CD4-positive, alpha-beta memory T cell (primary cell): ENCODE measurements at regions of chr16 and their contacts with region 1.

Region 1: GRCh38 chr16:69186642-69187445 is at the start of gene SNTB2:
- DNase-seq: peak; percentile 79 to 89 (median 82)
- H3K4me3 ChIP-seq: peak within 1 kb of the TSS; percentile 73 to 77
- H3K4me3 Mint-ChIP-seq: peak within 1 kb of the TSS; percentile 96 to 100 (median 99)
- H3K27ac ChIP-seq: peak within 1 kb of the TSS; percentile 51
- H3K27ac Mint-ChIP-seq: peak within 1 kb of the TSS; percentile 93 to 100 (median 98)
- H3K4me1 ChIP-seq: peaks cover 54% of the 10 kb centered on the region
- H3K4me1 Mint-ChIP-seq: peaks cover 29 to 61% (median 45%) of the 10 kb centered on the region in 4 donors
- H3K27me3 ChIP-seq: no peaks in the 10 kb centered on the region
- H3K27me3 Mint-ChIP-seq: peaks cover 0 to 2% of the 10 kb centered on the region in 2 donors
- total RNA-seq, gene SNTB2: 15.4 to 21.2 TPM

Region 2: DNA sequence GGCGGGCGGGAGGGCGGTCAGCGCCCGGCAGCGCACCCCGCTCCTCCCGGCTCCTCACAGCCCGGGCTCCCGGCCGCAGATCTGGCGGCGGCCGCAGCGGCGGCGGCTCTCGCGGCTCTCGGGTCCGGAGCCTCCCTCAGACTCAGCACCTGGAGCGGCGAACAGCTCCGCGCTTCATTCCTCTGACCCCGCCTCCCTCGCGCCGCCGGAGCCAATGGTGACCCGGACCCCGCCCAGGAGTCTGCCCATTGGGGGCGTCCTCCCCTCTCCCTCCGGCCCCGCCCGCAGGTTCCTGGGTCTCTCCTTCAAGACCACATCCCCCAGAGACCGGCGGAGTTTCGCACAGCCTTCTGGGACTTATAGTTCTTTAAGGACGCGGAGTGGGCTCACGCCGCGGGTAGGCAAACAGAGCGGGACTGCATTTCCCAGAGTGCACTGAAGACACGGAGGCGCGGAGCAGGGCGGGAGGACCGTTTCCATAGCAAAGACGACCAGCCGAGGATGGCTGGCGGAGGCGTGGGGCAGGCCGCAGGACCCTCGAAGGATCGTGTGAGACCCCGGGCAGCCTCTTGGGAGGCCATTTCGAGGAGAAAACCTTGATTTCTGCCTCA is 738.4 kb before region 1 on chr16 and contains the start of gene SMPD3:
- CTCF ChIA-PET with region 1: no interaction called
- POLR2A ChIA-PET with region 1: no interaction called
- intact Hi-C with region 1: loop called (anchors 1 kb)
- DNase-seq: peak; percentile 97 to 99 (median 98)
- H3K4me3 ChIP-seq: peak within 1 kb of the TSS; percentile 47 to 61
- H3K4me3 Mint-ChIP-seq: peak within 1 kb of the TSS; percentile 70 to 89 (median 78)
- H3K27ac ChIP-seq: no peak within 1 kb of the TSS
- H3K27ac Mint-ChIP-seq: peak within 1 kb of the TSS in 6 of 7 donors; percentile 43 to 88 (median 65)
- H3K4me1 ChIP-seq: peaks cover 36% of the 10 kb centered on the region
- H3K4me1 Mint-ChIP-seq: peaks cover 15 to 34% (median 22%) of the 10 kb centered on the region in 4 donors
- H3K27me3 ChIP-seq: peaks cover 8% of the 10 kb centered on the region
- H3K27me3 Mint-ChIP-seq: peaks cover 12 to 14% of the 10 kb centered on the region in 2 donors
- total RNA-seq, gene SMPD3: 0.75 to 3.1 TPM

Region 3: DNA sequence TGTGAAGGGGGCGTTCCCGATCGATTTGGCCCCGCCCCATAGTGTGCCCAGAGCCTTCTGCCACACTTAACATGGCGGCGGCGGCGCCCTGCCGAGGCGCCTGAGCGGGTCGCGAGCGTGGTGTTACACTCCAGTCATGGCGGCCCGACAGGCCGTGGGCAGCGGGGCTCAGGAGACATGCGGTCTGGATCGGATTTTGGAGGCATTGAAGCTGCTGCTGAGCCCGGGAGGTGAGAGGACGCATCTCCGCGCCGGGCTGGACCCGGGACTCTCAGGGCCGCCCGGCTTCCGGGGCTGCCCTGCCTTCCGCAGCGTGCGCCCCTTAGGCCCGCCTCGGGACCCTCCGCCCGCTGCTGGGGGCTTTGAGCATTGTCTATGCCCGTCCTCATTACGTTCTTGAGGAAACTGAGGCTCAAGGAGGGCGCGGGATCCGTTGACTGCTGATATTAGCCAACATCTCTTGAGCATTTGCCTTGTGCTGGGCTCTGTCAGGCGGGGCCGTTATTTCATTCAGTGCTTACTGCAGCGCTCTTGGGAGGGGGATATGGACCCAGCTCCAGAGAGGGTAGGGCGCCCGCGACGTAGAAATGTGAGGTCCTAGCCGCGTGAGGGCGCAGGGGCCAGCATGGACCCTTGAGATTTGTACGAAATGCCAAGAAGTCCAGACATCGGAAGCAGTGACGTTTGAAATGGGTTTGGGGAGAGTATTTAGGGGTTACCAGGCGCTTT is 343.2 kb before region 1 on chr16 and contains the start of gene TANGO6:
- CTCF ChIA-PET with region 1: no interaction called
- POLR2A ChIA-PET with region 1: no interaction called
- intact Hi-C with region 1: loop called (anchors 1 kb)
- DNase-seq: peak; percentile 86 to 90 (median 88)
- H3K4me3 ChIP-seq: peak within 1 kb of the TSS; percentile 84 to 94
- H3K4me3 Mint-ChIP-seq: peak within 1 kb of the TSS; percentile 86 to 97 (median 95)
- H3K27ac ChIP-seq: peak within 1 kb of the TSS; percentile 71
- H3K27ac Mint-ChIP-seq: peak within 1 kb of the TSS; percentile 67 to 96 (median 94)
- H3K4me1 ChIP-seq: peaks cover 25% of the 10 kb centered on the region
- H3K4me1 Mint-ChIP-seq: peaks cover 16 to 35% (median 26%) of the 10 kb centered on the region in 4 donors
- H3K27me3 ChIP-seq: no peaks in the 10 kb centered on the region
- H3K27me3 Mint-ChIP-seq: peaks cover 0 to 1% of the 10 kb centered on the region in 2 donors
- total RNA-seq, gene TANGO6: 35.5 to 38.1 TPM

Region 4: GRCh38 chr16:69150146-69150865 is 36.5 kb before region 1 on chr16:
- CTCF ChIA-PET with region 1: interaction called, 8 read pairs
- POLR2A ChIA-PET with region 1: interaction called, 6 read pairs
- intact Hi-C with region 1: loop called (anchors 5 kb)
- DNase-seq: peak; percentile 53 to 68 (median 64)
- H3K4me3 ChIP-seq: no peak overlapping the region
- H3K4me3 Mint-ChIP-seq: no peak overlapping the region
- H3K27ac ChIP-seq: no peak overlapping the region
- H3K27ac Mint-ChIP-seq: no peak overlapping the region
- H3K4me1 ChIP-seq: no peaks in the 10 kb centered on the region
- H3K4me1 Mint-ChIP-seq: peaks cover 0 to 4% (median 3%) of the 10 kb centered on the region in 4 donors
- H3K27me3 ChIP-seq: no peaks in the 10 kb centered on the region
- H3K27me3 Mint-ChIP-seq: no peaks in the 10 kb centered on the region

Region 5: DNA sequence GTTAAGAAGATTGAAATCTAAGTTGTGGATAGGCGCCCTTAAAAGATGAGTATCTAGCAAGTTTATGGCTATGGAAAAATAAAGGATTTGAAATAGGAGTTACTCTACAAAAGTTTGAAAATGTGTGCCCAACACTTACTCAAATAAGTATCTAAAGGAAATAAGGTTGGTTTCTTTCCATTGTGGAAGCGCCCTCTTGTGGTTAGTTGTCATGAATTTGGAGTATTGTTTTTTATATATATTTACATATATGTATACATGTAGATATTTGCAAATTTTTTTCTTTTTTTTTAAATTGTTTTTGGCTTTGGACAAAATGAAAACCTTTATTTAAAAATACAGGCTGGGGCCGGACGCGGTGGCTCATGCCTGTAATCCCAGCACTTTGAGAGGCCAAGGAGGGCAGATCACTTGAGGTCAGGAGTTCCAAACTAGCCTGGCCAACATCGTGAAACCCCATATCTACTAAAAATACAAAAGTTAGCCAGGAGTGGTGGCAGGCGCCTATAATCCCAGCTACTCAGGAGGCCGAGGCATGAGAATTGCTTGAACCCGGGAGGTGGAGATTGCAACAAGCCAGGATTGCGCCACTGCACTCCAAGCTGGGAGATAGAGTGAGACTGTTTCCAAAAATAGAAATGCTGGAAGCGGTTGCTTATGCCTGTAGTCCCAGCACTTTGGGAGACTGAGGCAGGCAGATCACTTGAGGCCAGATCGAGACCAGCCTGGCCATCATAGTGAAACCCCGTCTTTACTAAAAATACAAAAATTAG is 100.3 kb after region 1 on chr16:
- CTCF ChIA-PET with region 1: interaction called, 10 read pairs
- POLR2A ChIA-PET with region 1: interaction called, 3 read pairs
- intact Hi-C with region 1: no loop called
- DNase-seq: peak; percentile 58 to 66 (median 61)
- H3K4me3 ChIP-seq: no peak overlapping the region
- H3K4me3 Mint-ChIP-seq: no peak overlapping the region
- H3K27ac ChIP-seq: no peak overlapping the region
- H3K27ac Mint-ChIP-seq: peak overlapping the region in 2 of 7 donors; percentile 65 to 72
- H3K4me1 ChIP-seq: no peaks in the 10 kb centered on the region
- H3K4me1 Mint-ChIP-seq: peaks cover 0 to 5% (median 3%) of the 10 kb centered on the region in 4 donors
- H3K27me3 ChIP-seq: no peaks in the 10 kb centered on the region
- H3K27me3 Mint-ChIP-seq: no peaks in the 10 kb centered on the region

Region 6: DNA sequence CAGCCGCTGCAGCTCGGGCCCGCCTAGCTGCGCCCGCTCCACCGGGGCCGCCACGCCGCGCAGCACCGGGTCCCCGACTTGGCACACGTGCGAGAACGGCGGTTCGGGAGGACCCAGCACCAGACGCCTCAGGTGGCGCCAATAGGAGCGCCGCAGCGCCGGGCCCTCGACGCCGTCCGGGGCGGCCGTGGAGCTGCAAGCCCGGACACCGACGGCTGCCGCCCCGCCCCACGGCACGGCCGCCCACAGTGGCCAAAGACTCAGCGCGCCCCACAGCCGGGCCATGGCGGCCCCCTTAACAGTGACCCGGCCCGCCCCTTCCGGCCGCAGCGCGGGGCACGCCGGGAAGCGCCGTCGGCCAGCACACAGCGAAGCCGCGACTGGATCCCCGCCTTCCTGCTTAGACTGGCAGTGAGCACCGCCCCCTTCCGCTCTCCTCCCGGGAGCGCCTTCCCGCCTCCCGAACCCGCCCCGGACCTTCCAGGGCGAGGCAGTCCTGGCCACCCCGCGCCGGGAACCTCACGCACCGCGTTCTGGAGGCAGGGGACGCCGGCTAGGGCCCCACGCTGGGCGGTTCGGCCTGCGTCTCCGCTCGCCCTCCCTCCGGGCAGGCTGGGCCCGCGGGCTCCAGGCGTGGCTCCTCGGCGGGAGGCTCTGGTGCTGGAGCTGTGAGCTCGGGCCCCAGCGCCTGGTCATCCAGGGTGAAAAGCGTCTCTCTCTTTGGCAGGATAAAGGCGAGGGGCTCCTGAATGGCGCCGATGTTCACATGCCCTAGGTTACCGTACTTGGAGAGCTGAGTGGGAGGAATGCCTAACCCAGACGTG is 143.7 kb after region 1 on chr16 and contains the start of gene PDF:
- CTCF ChIA-PET with region 1: no interaction called
- POLR2A ChIA-PET with region 1: interaction called, 10 read pairs
- intact Hi-C with region 1: no loop called
- DNase-seq: peak; percentile 72 to 82 (median 78)
- H3K4me3 ChIP-seq: peak within 1 kb of the TSS; percentile 36 to 73
- H3K4me3 Mint-ChIP-seq: peak within 1 kb of the TSS; percentile 77 to 87 (median 82)
- H3K27ac ChIP-seq: peak within 1 kb of the TSS; percentile 83
- H3K27ac Mint-ChIP-seq: peak within 1 kb of the TSS; percentile 49 to 90 (median 88)
- H3K4me1 ChIP-seq: peaks cover 49% of the 10 kb centered on the region
- H3K4me1 Mint-ChIP-seq: peaks cover 27 to 58% (median 43%) of the 10 kb centered on the region in 4 donors
- H3K27me3 ChIP-seq: no peaks in the 10 kb centered on the region
- H3K27me3 Mint-ChIP-seq: no peaks in the 10 kb centered on the region
- total RNA-seq, gene PDF: 11.8 TPM